Prostate gland (tissue), 2 donors: ENCODE measurements at regions of chr1 and their contacts with region 1.

Region 1: DNA sequence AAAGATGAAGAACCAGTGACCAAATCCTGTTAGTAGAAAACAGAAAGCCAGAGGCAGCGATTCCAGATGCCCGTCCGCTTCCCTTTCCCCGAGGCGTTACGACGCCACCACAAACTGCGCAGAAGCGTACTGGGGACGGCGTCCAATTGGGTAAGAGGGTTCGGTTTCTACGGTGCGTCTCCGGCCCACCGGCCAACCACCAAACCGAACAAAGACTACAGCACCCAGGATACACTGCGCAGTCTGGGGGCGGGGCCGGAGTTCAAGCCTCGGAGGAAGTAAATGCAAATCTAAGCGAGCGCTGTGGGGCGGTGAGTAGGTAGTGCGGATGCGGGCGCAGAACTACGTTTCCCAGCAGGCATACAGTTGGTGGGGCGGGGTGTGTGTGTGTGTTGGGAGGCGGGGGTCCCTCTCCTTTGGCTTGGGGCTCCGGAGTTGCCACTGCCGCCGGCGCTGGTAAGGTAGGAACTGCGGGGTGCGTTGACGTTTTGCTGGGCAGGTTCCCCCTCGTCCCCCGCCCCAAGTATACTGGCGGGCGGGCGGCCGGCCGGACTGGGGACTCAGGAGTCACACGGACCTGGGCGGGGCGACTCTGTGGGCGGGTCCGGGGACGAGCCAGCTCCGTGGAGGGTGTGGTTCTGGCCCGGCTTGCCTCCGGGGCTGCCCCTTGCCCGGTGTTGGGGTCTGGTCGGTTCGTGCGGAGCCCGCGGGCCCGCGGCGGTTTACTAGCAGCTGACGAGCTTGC is at the starts of genes SWT1 and TRMT1L:
- DNase-seq: peak; percentile 100
- H3K4me3 ChIP-seq: peak within 1 kb of the TSS; percentile 73 to 94
- H3K27ac ChIP-seq: peak within 1 kb of the TSS; percentile 97 to 98
- H3K4me1 ChIP-seq: peaks cover 8% of the 10 kb centered on the region
- H3K27me3 ChIP-seq: no peaks in the 10 kb centered on the region
- CTCF ChIP-seq: no peak
- POLR2A ChIP-seq: peak; percentile 93
- total RNA-seq, gene SWT1: 7.3 to 14.3 TPM
- total RNA-seq, gene TRMT1L: 19.8 to 35.7 TPM

Region 2: DNA sequence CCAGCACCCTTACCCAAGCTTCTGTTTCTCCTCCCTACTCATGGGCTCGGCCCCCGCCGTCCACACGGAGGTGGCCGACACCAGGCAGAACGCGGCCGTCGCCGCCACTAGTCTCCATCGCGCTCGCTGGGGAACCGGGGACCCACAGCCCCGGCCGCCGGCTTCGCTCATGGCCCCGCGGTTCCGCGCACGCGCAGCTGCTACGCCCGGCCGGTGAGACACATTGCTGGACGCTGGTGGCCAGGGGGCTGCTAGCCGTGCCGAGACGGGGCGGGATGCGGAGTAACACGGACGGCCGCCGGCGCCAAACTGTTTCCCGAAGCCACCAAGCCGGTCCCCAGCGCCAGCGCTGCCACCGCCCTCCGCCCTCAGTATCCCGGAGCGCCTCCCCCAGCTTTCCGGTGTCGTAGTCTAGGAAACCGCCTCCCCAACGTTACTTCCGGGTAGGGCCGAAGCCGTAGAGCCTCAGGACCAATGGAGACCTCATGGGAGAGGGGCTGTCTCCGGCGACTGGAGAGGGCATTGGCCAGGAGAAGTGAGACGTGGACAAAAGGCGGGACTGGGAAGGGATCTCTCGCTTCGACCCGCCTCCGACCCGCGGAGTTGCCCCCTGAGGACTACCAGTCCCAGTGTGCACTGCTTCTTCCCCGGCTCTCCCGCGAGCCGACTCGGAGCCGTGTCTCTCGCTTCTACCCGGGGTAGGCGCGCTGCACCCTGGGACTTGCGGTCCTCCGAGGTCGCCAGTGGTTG is 402.4 kb before region 1 on chr1 and contains the start of gene EDEM3:
- intact Hi-C with region 1: loop called (anchors 5 kb)
- DNase-seq: peak; percentile 99
- H3K4me3 ChIP-seq: peak within 1 kb of the TSS; percentile 94 to 98
- H3K27ac ChIP-seq: peak within 1 kb of the TSS; percentile 92 to 95
- H3K4me1 ChIP-seq: peaks cover 3% of the 10 kb centered on the region
- H3K27me3 ChIP-seq: no peaks in the 10 kb centered on the region
- CTCF ChIP-seq: no peak
- POLR2A ChIP-seq: peak; percentile 94
- total RNA-seq, gene EDEM3: 31.1 to 55.3 TPM

Region 3: GRCh38 chr1:184805667-184806295 is 351.2 kb before region 1 on chr1:
- intact Hi-C with region 1: loop called (anchors 5 kb)
- DNase-seq: peak; percentile 92
- H3K4me3 ChIP-seq: no peak overlapping the region
- H3K27ac ChIP-seq: no peak overlapping the region
- H3K4me1 ChIP-seq: peaks cover 15% of the 10 kb centered on the region
- H3K27me3 ChIP-seq: no peaks in the 10 kb centered on the region
- CTCF ChIP-seq: peak; percentile 73 to 96 (median 92)
- POLR2A ChIP-seq: no peak

Region 4: DNA sequence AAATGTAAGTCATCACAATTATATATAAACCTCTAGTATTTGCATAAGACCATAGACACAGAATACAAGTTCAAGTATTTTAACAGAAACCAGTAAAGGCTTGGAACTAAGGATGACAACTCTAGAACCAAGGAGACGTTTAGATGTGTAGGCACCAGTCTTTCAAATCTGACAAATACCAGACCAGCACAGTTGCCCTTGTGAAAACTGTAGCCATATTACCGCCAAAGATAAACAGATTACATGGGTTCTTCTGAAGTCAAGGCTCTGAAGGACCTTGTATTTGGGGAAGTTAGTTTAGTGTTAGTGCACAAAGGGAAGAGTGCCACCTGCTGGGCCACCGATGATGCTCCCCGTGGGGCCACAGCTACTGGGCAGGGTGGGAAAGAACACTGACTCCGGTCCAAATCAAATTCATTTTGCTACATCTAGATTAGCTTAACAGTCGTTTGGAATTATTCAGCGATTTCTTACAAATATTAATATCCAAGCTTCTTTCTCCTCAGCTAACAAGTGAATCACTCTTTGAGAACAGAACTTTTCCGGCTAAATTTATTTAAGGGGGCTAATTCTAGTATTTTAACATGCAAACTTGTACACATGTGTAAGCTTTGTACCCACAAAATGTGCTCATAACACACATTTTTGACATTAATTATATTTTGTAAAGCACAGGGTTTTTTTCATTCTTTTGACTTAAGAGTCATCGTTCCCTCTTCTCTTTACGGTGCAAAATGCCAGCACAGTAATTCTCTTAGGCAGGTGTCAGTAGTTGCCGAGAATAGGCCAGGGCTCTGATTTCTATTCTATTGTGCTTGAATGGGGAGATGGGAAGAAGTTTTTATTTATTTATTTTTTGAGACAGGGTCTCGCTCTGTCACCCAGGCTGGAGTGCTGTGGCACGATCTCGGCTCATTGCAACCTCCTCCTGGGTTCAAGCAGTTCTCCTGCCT is 174.7 kb before region 1 on chr1:
- intact Hi-C with region 1: loop called (anchors 10 kb)
- DNase-seq: peak; percentile 77
- H3K4me3 ChIP-seq: no peak overlapping the region
- H3K27ac ChIP-seq: no peak overlapping the region
- H3K4me1 ChIP-seq: no peaks in the 10 kb centered on the region
- H3K27me3 ChIP-seq: no peaks in the 10 kb centered on the region
- CTCF ChIP-seq: peak; percentile 80 to 92 (median 88)
- POLR2A ChIP-seq: no peak

Region 5: GRCh38 chr1:185044981-185045813 is 111.8 kb before region 1 on chr1 and contains the start of gene RNF2:
- intact Hi-C with region 1: loop called (anchors 5 kb)
- DNase-seq: peak; percentile 75
- H3K4me3 ChIP-seq: peak within 1 kb of the TSS; percentile 59 to 84
- H3K27ac ChIP-seq: peak within 1 kb of the TSS; percentile 80 to 85
- H3K4me1 ChIP-seq: no peaks in the 10 kb centered on the region
- H3K27me3 ChIP-seq: no peaks in the 10 kb centered on the region
- CTCF ChIP-seq: peak in 1 of 4 experiments; percentile 41
- POLR2A ChIP-seq: no peak
- total RNA-seq, gene RNF2: 16.9 to 33.1 TPM

Region 6: DNA sequence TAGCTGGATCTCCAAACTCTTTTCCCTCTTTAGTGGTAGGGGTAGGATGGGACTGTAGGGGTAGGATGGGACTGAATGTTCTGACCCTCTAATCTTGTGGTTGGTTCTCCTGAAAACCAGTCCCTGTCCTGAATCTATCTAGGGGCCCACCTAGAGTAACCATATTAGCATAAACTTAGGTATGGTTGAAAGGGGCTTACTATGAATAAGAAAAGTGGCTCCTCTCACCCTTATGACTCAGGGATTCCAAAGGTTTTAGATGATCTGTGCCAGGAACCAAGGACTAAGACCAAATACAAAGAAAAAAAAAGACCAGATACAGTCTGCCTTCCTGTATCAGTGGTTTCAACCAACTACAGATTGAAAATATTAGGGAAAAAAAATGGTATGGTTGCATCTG is 82.7 kb before region 1 on chr1:
- intact Hi-C with region 1: no loop called
- DNase-seq: no peak
- H3K4me3 ChIP-seq: no peak overlapping the region
- H3K27ac ChIP-seq: no peak overlapping the region
- H3K4me1 ChIP-seq: no peaks in the 10 kb centered on the region
- H3K27me3 ChIP-seq: no peaks in the 10 kb centered on the region
- CTCF ChIP-seq: no peak
- POLR2A ChIP-seq: no peak